Ascending aorta (tissue), 2 donors: ENCODE measurements at regions of chr7 and their contacts with region 1.

Region 1: DNA sequence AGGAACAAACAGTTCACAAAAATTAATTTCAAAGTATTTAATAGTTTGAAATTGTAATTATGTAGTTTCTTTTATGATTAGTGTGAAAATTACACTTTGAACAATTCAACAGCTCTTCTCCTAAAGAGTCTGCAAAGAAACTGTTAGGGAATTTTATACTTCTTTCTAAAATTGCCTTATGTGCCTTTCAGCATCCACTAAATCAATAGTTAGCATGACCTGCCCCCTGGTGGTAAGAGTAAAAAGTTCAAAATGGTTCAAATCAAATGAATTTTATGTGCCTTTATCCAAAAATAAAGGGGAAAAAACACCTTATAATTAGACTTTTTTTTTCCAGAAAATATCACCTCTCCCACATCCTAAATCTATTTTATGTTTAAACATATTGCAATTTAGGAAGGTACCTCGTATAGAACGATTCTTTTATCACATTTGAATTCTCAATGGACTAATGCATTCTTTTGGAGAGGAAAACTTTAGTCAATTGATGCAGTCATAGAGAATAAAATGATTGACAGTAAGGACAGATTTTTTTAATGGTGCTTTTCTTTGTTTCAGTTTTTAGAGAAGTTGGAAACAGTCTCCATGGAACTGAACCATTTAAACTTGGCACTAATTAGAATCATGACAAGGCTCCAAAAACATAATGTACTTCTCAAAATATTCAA is 163.7 kb downstream of the SEMA3D start:
- DNase-seq: no peak
- H3K4me3 ChIP-seq: no peak overlapping the region
- H3K27ac ChIP-seq: no peak overlapping the region
- H3K4me1 ChIP-seq: no peaks in the 10 kb centered on the region
- H3K27me3 ChIP-seq: no peaks in the 10 kb centered on the region
- CTCF ChIP-seq: peak; percentile 48 to 72 (median 49)

Region 2: DNA sequence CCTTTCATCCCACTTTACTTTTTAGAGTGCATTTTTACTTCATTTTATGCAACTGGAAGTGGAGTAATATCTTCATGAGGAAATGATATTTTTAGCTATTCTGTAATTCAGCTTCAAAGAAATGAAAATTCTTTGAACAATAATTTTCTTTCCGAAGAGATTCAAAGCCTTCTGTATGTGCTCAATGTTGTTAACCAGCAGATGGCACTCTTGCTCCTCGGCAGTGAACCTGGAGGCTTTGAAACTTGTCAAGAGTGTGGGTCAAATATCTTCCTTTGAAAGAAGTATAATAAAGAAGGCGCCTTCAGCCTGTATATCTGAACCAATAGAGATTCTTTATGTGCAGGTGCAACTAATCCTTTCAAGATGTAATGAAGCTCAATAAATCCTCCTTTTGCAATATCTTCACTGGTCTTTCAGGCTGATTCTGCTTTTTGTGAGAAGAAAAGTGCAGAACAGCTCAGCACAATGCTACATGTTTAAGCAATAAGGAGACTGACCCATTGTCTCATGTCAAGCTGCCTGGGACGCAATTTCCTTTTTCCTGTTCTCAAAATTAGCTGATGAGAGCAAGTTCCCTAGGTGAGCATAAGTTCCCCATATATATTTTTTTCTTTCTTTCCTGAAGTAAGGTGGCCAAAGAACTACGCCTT is 1087.0 kb before region 1 on chr7:
- intact Hi-C with region 1: loop called (anchors 5 kb)
- DNase-seq: no peak
- H3K4me3 ChIP-seq: no peak overlapping the region
- H3K27ac ChIP-seq: no peak overlapping the region
- H3K4me1 ChIP-seq: no peaks in the 10 kb centered on the region
- H3K27me3 ChIP-seq: no peaks in the 10 kb centered on the region
- CTCF ChIP-seq: peak; percentile 22 to 73 (median 63)

Region 3: GRCh38 chr7:83976295-83976694 is 1046.9 kb before region 1 on chr7:
- intact Hi-C with region 1: loop called (anchors 1 kb)
- DNase-seq: no peak
- H3K4me3 ChIP-seq: no peak overlapping the region
- H3K27ac ChIP-seq: no peak overlapping the region
- H3K4me1 ChIP-seq: no peaks in the 10 kb centered on the region
- H3K27me3 ChIP-seq: no peaks in the 10 kb centered on the region
- CTCF ChIP-seq: peak; percentile 24 to 52 (median 33)

Region 4: DNA sequence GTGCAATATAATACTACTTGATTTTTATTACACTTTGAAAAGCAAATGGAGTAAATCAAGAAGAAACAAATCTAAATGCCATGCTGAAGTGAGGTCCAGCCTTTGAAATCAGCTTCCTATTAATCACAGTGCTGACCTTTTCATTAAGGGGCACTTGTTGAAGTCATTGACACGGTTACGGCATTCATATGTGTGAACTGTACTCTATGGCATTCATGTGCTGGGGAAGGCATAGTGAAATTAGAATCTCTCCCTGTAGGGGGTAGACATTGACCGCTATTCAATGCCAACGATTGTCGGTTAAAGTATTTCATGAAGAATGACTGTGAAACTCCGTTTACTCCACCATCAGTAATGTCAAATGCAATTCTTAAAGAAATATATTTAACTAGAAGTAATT is 532.5 kb before region 1 on chr7:
- intact Hi-C with region 1: loop called (anchors 1 kb)
- DNase-seq: no peak
- H3K4me3 ChIP-seq: no peak overlapping the region
- H3K27ac ChIP-seq: no peak overlapping the region
- H3K4me1 ChIP-seq: no peaks in the 10 kb centered on the region
- H3K27me3 ChIP-seq: no peaks in the 10 kb centered on the region
- CTCF ChIP-seq: peak in 2 of 3 experiments; percentile 23 to 42

Region 5: DNA sequence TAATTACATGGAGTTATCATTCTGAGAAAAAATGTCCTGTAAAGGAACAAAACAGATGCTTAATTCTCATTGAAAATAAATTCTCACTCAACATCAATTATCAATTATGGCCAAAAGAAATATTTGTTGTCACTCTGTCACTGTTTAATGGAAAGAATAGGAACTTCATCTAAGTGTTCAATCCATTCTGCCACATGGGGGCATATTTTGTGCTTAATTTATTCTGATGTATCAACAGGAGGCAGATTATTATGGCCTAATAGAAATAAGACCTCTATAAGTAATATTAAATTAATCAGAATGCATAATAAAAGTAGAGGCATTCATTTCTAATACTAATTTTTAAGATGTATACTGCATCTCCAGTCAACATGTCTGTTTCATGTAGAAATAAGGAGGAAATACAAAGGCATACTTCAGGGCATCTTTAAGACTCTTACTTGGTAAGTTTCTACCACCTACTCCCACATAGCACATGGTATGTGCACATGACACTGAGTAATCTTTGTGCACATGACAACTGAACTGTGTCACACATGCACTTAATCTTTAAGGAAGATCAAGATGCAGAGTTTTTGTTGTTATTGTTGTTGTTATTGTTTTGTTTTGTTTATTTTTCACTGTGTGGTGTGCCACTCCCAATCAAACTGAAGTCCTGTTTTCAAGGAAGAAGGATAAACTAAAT is 408.2 kb before region 1 on chr7:
- intact Hi-C with region 1: loop called (anchors 10 kb)
- DNase-seq: no peak
- H3K4me3 ChIP-seq: no peak overlapping the region
- H3K27ac ChIP-seq: no peak overlapping the region
- H3K4me1 ChIP-seq: no peaks in the 10 kb centered on the region
- H3K27me3 ChIP-seq: no peaks in the 10 kb centered on the region
- CTCF ChIP-seq: peak in 1 of 3 experiments; percentile 21

Region 6: GRCh38 chr7:85061456-85061855 is 38.3 kb after region 1 on chr7:
- intact Hi-C with region 1: no loop called
- DNase-seq: no peak
- H3K4me3 ChIP-seq: no peak overlapping the region
- H3K27ac ChIP-seq: no peak overlapping the region
- H3K4me1 ChIP-seq: peaks cover 0 to 16% of the 10 kb centered on the region in 2 donors
- H3K27me3 ChIP-seq: no peaks in the 10 kb centered on the region
- CTCF ChIP-seq: no peak

Region 7: GRCh38 chr7:85554236-85555178 is 531.3 kb after region 1 on chr7:
- intact Hi-C with region 1: loop called (anchors 5 kb)
- DNase-seq: peak in 1 of 2 donors; percentile 58
- H3K4me3 ChIP-seq: no peak overlapping the region
- H3K27ac ChIP-seq: no peak overlapping the region
- H3K4me1 ChIP-seq: no peaks in the 10 kb centered on the region
- H3K27me3 ChIP-seq: no peaks in the 10 kb centered on the region
- CTCF ChIP-seq: peak; percentile 39 to 71 (median 59)